HepG2 (cell line): ENCODE measurements at regions of chr14 and their contacts with region 1.

Region 1: GRCh38 chr14:90399541-90400444 is 3.0 kb downstream of the CALM1 start:
- DNase-seq: peak; percentile 83
- ATAC-seq: peak; percentile 68
- H3K4me3 ChIP-seq: peak overlapping the region in 2 of 3 experiments; percentile 20 to 71; a peak in 2 of 6 replicates
- H3K27ac ChIP-seq: no peak overlapping the region
- H3K4me1 ChIP-seq: peaks cover 39% of the 10 kb centered on the region
- H3K27me3 ChIP-seq: peaks cover 0 to 4% of the 10 kb centered on the region in 2 experiments; a peak in 1 of 5 replicates
- CTCF ChIP-seq: peak; percentile 98
- EP300 ChIP-seq: no peak
- POLR2A ChIP-seq: no peak
- RAD21 ChIP-seq: peak; percentile 91

Region 2: GRCh38 chr14:90355540-90356518 is 44.0 kb before region 1 on chr14:
- CTCF ChIA-PET with region 1: no interaction called
- POLR2A ChIA-PET with region 1: no interaction called
- in situ Hi-C with region 1: no loop called
- intact Hi-C with region 1: no loop called
- DNase-seq: peak; percentile 16
- ATAC-seq: peak; percentile 73
- H3K4me3 ChIP-seq: no peak overlapping the region
- H3K27ac ChIP-seq: peak overlapping the region; percentile 8
- H3K4me1 ChIP-seq: peaks cover 28% of the 10 kb centered on the region
- H3K27me3 ChIP-seq: no peaks in the 10 kb centered on the region
- CTCF ChIP-seq: no peak
- EP300 ChIP-seq: no peak
- POLR2A ChIP-seq: no peak
- RAD21 ChIP-seq: no peak

Region 3: GRCh38 chr14:90368946-90369721 is 30.7 kb before region 1 on chr14:
- CTCF ChIA-PET with region 1: no interaction called
- POLR2A ChIA-PET with region 1: no interaction called
- in situ Hi-C with region 1: no loop called
- intact Hi-C with region 1: no loop called
- DNase-seq: peak; percentile 73
- ATAC-seq: peak; percentile 90
- H3K4me3 ChIP-seq: no peak overlapping the region
- H3K27ac ChIP-seq: no peak overlapping the region
- H3K4me1 ChIP-seq: peaks cover 27% of the 10 kb centered on the region
- H3K27me3 ChIP-seq: no peaks in the 10 kb centered on the region
- CTCF ChIP-seq: peak; percentile 38
- EP300 ChIP-seq: no peak
- POLR2A ChIP-seq: no peak
- RAD21 ChIP-seq: no peak

Region 4: DNA sequence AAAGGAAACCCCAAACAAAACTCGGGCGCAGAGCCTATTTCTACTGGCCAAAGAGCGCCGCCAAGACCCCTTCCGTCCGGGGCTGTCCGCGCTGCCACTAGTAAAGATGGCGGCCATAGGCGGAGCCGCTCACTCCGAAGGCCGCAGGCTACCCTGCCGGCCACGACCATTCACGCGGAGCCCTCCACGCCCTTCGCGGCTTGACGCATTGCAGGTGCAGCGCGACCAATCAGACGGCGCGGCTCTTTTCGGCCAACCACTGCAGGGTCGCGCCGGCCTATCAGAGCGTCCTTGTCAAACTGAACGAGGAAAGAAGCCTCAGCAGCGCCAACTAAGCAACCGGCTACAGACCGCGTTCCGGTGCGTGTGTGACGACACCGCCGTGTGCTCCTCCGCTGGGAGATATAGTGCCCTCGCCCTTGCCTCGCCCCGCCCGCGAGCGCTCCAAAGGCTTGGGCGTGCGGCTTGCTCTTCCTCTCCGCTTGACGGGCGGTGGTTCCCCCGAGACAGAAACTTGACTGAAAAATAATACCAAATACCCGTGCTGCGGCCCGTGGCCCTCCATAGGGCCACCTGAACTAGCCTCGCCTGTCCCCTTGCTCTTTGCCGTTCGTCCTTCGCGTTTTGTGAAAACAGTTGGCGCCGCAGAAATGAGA is 16.6 kb before region 1 on chr14:
- CTCF ChIA-PET with region 1: interaction called, 3 read pairs
- POLR2A ChIA-PET with region 1: interaction called, 105 read pairs
- in situ Hi-C with region 1: no loop called
- intact Hi-C with region 1: loop called (anchors 1 kb)
- DNase-seq: peak; percentile 98
- ATAC-seq: peak; percentile 92
- H3K4me3 ChIP-seq: peak overlapping the region; percentile 72 to 79 (median 74)
- H3K27ac ChIP-seq: peak overlapping the region; percentile 96
- H3K4me1 ChIP-seq: peaks cover 41% of the 10 kb centered on the region
- H3K27me3 ChIP-seq: no peaks in the 10 kb centered on the region; a peak in 1 of 5 replicates
- CTCF ChIP-seq: peak; percentile 53
- EP300 ChIP-seq: peak; percentile 21 to 25; a peak in 1 of 4 replicates
- POLR2A ChIP-seq: peak; percentile 85 to 94
- RAD21 ChIP-seq: no peak

Region 5: GRCh38 chr14:90467501-90467900 is 67.7 kb after region 1 on chr14:
- CTCF ChIA-PET with region 1: no interaction called
- POLR2A ChIA-PET with region 1: no interaction called
- in situ Hi-C with region 1: no loop called
- intact Hi-C with region 1: no loop called
- DNase-seq: no peak
- ATAC-seq: no peak
- H3K4me3 ChIP-seq: no peak overlapping the region
- H3K27ac ChIP-seq: no peak overlapping the region
- H3K4me1 ChIP-seq: no peaks in the 10 kb centered on the region
- H3K27me3 ChIP-seq: peaks cover 0 to 3% of the 10 kb centered on the region in 2 experiments; a peak in 1 of 5 replicates
- CTCF ChIP-seq: no peak
- EP300 ChIP-seq: no peak
- POLR2A ChIP-seq: no peak
- RAD21 ChIP-seq: no peak

Region 6: GRCh38 chr14:90518941-90519256 is 119.1 kb after region 1 on chr14:
- CTCF ChIA-PET with region 1: interaction called, 54 read pairs
- POLR2A ChIA-PET with region 1: interaction called, 17 read pairs
- in situ Hi-C with region 1: loop called (anchors 5 kb)
- intact Hi-C with region 1: loop called (anchors 1 kb)
- DNase-seq: peak; percentile 53
- ATAC-seq: peak; percentile 63
- H3K4me3 ChIP-seq: no peak overlapping the region
- H3K27ac ChIP-seq: no peak overlapping the region
- H3K4me1 ChIP-seq: peaks cover 52% of the 10 kb centered on the region
- H3K27me3 ChIP-seq: peaks cover 3 to 5% of the 10 kb centered on the region in 2 experiments; a peak in 1 of 5 replicates
- CTCF ChIP-seq: peak; percentile 90
- EP300 ChIP-seq: no peak
- POLR2A ChIP-seq: no peak
- RAD21 ChIP-seq: peak; percentile 75

Region 7: DNA sequence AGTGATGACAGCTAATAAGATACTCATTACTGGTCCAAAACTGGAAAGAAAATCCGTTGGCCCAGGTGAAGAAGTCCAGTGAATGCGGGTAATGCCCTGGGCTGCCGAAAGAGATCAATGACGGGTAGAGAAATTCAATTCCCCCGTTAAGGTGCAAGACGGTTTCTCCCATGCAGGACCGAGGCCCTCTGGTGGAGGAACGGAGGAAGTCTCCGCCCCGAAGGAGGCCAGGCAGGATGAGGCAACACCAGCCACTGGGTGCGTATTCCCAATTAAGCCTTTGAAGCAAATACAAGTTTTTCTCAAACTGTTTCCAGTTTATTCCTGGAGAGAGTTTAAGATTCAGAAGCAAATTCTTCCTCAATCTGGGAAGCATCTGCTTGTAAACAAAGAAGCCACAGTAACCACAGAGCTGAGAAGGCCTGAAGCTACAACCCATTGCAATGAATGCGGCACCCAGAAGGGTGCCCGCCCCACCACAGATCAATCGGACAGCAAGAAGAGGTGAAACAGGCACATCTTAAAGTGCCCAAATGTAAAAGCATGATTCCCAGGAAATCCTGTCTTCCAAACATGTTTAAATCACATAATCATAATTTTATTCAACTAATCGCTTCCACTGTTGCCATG is 297.9 kb after region 1 on chr14:
- CTCF ChIA-PET with region 1: interaction called, 44 read pairs
- POLR2A ChIA-PET with region 1: no interaction called
- in situ Hi-C with region 1: loop called (anchors 10 kb)
- intact Hi-C with region 1: loop called (anchors 1 kb)
- DNase-seq: peak; percentile 61
- ATAC-seq: peak; percentile 95
- H3K4me3 ChIP-seq: no peak overlapping the region
- H3K27ac ChIP-seq: no peak overlapping the region
- H3K4me1 ChIP-seq: no peaks in the 10 kb centered on the region
- H3K27me3 ChIP-seq: no peaks in the 10 kb centered on the region
- CTCF ChIP-seq: peak; percentile 93
- EP300 ChIP-seq: no peak
- POLR2A ChIP-seq: no peak
- RAD21 ChIP-seq: peak; percentile 89